ENCODE measurements at regions of chr12 and their contacts with region 1.

Region 1: GRCh38 chr12:48977315-48978281 is 524 bp upstream of the WNT1 start:
- DNase-seq: peak; percentile 72
- H3K4me3 Mint-ChIP-seq: peak overlapping the region; percentile 55
- H3K27ac Mint-ChIP-seq: peak overlapping the region; percentile 73
- H3K4me1 Mint-ChIP-seq: peaks cover 62% of the 10 kb centered on the region
- H3K27me3 Mint-ChIP-seq: peaks cover 80% of the 10 kb centered on the region

Region 2: GRCh38 chr12:48001505-48002413 is 975.8 kb before region 1 on chr12:
- intact Hi-C with region 1: loop called (anchors 5 kb)
- DNase-seq: no peak
- H3K4me3 Mint-ChIP-seq: peak overlapping the region; percentile 54
- H3K27ac Mint-ChIP-seq: peak overlapping the region; percentile 36
- H3K4me1 Mint-ChIP-seq: peaks cover 32% of the 10 kb centered on the region
- H3K27me3 Mint-ChIP-seq: peaks cover 87% of the 10 kb centered on the region

Region 3: GRCh38 chr12:48936379-48936979 is 41.1 kb before region 1 on chr12:
- intact Hi-C with region 1: loop called (anchors 2 kb)
- DNase-seq: peak; percentile 63
- H3K4me3 Mint-ChIP-seq: no peak overlapping the region
- H3K27ac Mint-ChIP-seq: no peak overlapping the region
- H3K4me1 Mint-ChIP-seq: peaks cover 41% of the 10 kb centered on the region
- H3K27me3 Mint-ChIP-seq: no peaks in the 10 kb centered on the region

Region 4: DNA sequence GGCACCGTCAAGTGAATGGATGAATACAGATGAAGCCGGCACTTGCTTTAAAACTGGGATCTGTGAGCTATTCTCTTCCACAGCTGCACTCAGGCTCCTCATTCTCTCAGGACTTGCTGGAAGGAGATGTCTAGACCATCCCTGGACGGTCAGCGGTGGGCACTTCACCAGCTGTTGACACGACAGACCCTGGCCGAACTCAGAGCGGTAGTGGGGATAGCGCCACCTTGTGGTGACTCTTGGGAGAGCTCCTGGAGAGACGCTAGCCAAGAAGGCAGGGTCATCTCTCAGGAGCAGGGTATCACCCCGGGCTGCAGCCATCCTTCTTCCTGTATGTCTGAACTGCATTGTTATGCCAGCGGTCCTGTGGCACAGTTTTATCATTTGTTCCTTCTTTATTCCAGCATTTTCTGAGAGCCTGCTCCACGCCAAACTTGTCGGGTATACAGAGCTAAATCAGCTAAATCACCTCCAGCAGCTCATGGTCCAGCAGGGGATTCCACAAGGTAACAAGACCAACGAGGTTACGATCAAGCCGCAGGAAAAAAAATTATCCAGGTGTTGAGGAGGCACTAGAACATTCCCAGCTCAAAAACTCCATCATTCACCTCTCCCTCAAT is 10.5 kb after region 1 on chr12:
- intact Hi-C with region 1: loop called (anchors 2 kb)
- DNase-seq: peak; percentile 59
- H3K4me3 Mint-ChIP-seq: no peak overlapping the region
- H3K27ac Mint-ChIP-seq: no peak overlapping the region
- H3K4me1 Mint-ChIP-seq: peaks cover 10% of the 10 kb centered on the region
- H3K27me3 Mint-ChIP-seq: peaks cover 76% of the 10 kb centered on the region

Region 5: GRCh38 chr12:49088190-49088931 is 110.8 kb after region 1 on chr12:
- intact Hi-C with region 1: loop called (anchors 2 kb)
- DNase-seq: peak; percentile 67
- H3K4me3 Mint-ChIP-seq: peak overlapping the region; percentile 42
- H3K27ac Mint-ChIP-seq: no peak overlapping the region
- H3K4me1 Mint-ChIP-seq: peaks cover 57% of the 10 kb centered on the region
- H3K27me3 Mint-ChIP-seq: peaks cover 38% of the 10 kb centered on the region

Measured in activated T-helper 1 cell treated with anti-CD3 and anti-CD28 coated beads, Interleukin-12 subunit alpha, Interleukin-12 subunit beta, Interleukin-2, Interleukin-4 antibody, amounts not matched to agents 30 ng/mL and 10 ng/mL and 1 ng/mL, durations not matched to agents 14 hours and 24 hours and 36 hours (primary cell).